ENCODE measurements at regions of chr20 and their contacts with region 1.

Region 1: GRCh38 chr20:49219089-49219923 is at the start of gene DDX27:
- DNase-seq: peak; percentile 96 to 98 (median 98)
- H3K4me3 ChIP-seq: peak within 1 kb of the TSS; percentile 54 to 98 (median 86)
- H3K27ac ChIP-seq: peak within 1 kb of the TSS; percentile 5 to 96 (median 84)
- H3K27me3 ChIP-seq: no peaks in the 10 kb centered on the region
- CTCF ChIP-seq: peak in 32 of 56 donors; percentile 5 to 61 (median 20)
- total RNA-seq, gene DDX27: 19.9 to 45.2 (median 27.8) TPM

Region 2: GRCh38 chr20:48986899-48987298 is 232.4 kb before region 1 on chr20:
- intact Hi-C with region 1: loop called in 1 of 2 experiments (anchors 5 kb)
- DNase-seq: peak in 1 of 10 donors; percentile 50
- H3K4me3 ChIP-seq: no peak overlapping the region
- H3K27ac ChIP-seq: peak overlapping the region in 19 of 59 donors; percentile 1 to 66 (median 22)
- H3K27me3 ChIP-seq: no peaks in the 10 kb centered on the region
- CTCF ChIP-seq: peak in 54 of 56 donors; percentile 25 to 73 (median 47)

Region 3: DNA sequence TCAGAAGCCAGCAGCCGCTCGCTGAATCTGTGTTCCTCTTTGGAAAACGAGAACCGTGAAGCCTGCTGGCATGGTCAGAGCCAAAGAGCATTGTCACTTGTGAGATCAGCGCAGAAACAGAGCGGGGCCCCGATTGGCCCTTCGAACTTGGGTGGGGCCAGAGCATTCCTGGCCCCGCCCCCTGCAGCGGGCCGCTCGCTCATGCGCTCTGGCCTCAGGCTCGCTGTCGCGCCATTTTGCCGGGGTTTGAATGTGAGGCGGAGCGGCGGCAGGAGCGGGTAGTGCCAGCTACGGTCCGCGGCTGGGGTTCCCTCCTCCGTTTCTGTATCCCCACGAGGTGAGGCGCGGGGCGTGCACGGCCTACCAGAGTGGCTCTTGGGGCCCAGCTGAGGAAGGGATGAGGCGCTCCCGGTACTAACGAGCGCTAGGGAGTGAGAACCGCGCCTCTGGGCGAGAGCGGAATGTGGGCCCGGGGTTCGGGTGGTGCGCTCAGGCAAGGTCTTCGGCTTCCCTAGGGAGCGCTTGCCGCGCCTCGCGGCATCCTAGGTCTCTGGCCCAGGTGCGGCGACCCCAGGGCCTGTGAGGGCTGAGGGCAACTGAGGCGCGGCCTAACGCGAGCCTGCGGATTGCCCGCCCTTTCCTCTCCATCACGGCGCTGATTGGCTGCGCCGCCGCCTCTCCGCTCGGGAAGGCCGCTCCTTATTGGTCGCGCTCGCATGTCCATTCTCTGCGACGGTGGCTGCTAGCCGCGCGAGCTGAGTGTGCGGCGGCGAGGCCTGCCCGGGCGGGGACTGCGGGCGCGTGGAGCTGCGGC is 173.0 kb before region 1 on chr20 and contains the start of gene CSE1L:
- intact Hi-C with region 1: loop called in 1 of 2 experiments (anchors 5 kb)
- DNase-seq: peak; percentile 93 to 98 (median 96)
- H3K4me3 ChIP-seq: peak within 1 kb of the TSS; percentile 76 to 100 (median 98)
- H3K27ac ChIP-seq: peak within 1 kb of the TSS; percentile 79 to 99 (median 93)
- H3K27me3 ChIP-seq: no peaks in the 10 kb centered on the region
- CTCF ChIP-seq: peak in 39 of 56 donors; percentile 6 to 49 (median 24)
- total RNA-seq, gene CSE1L: 28.8 to 70.9 (median 55.4) TPM

Region 4: DNA sequence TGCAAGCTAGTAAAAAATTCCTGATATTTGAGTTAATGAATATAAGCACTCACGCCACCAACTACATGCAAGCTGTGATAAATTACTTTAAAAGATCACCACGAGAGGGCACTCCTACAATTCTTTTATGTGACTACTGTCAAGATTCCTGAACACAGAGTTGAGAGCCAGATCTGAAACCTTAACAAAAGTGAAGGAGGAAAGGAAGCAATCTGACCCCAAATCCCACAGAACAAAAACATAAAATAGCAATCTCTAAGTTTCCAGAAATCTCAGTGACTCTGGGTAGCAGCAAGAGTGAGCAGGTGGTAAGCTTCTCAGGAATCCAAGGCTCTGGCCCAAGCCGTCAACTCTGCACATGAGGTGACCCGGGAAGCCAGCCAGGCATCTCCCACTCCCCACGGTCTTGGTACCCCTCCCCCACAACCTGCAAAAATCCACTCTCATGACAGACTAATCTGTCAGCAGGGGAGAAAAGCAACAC is 86.3 kb before region 1 on chr20:
- intact Hi-C with region 1: loop called (anchors 1 to 2 kb)
- DNase-seq: peak in 1 of 10 donors; percentile 13
- H3K4me3 ChIP-seq: no peak overlapping the region
- H3K27ac ChIP-seq: peak overlapping the region in 20 of 59 donors; percentile 1 to 61 (median 28)
- H3K27me3 ChIP-seq: no peaks in the 10 kb centered on the region
- CTCF ChIP-seq: peak; percentile 51 to 86 (median 73)

Region 5: DNA sequence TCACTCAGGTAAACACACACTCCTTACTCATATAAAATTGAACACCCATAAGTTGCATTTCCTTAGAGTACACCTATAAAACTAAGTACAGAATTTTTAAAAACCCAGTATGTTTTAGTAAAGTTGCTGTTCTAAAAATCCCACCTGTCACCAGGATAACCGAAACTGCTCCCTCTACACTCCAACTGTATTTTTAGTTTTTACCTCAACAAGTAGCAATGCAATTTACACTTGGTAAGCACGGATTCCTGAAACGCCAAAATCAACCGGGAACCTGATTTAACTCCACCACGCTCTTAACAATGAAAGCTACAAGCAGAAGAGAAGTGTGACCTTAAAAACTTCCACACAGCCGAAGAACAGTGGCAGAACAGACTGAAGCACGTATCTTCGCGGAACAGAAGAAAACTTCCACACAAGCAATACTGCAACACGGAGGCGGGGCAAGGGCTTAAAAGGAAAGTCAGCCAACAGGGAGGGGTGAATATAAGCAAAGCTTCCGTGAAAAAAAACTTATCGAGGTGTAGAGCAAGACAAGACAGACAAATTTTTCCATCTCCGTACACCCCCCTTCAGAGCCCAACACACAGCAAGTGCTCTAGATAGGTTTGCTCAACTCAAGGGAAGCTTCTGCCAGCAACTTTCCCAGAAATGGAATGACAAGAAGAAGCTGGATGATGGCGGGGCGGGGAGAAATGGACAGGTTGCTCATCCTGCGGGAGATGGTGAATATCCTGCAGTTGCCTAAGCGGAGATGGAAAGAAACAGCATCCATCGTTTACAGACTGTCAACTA is 32.6 kb before region 1 on chr20:
- intact Hi-C with region 1: loop called (anchors 1 to 2 kb)
- DNase-seq: peak in 2 of 10 donors; percentile 33 to 36
- H3K4me3 ChIP-seq: peak overlapping the region; percentile 52 to 95 (median 80)
- H3K27ac ChIP-seq: peak overlapping the region in 50 of 59 donors; percentile 29 to 93 (median 84)
- H3K27me3 ChIP-seq: no peaks in the 10 kb centered on the region
- CTCF ChIP-seq: no peak

Region 6: GRCh38 chr20:49278036-49278817 is 58.9 kb after region 1 on chr20 and contains the start of gene ZNFX1:
- intact Hi-C with region 1: loop called (anchors 2 to 5 kb)
- DNase-seq: peak; percentile 97 to 99 (median 98)
- H3K4me3 ChIP-seq: peak within 1 kb of the TSS; percentile 56 to 100 (median 90)
- H3K27ac ChIP-seq: peak within 1 kb of the TSS; percentile 71 to 100 (median 98)
- H3K27me3 ChIP-seq: no peaks in the 10 kb centered on the region
- CTCF ChIP-seq: peak in 45 of 56 donors; percentile 1 to 57 (median 30)
- total RNA-seq, gene ZNFX1: 21.0 to 37.9 (median 26.1) TPM

Measured in dorsolateral prefrontal cortex (tissue), 120 donors.